Activated CD8-positive, alpha-beta memory T cell treated with anti-CD3 and anti-CD28 coated beads, Interleukin-2, amount 10 ng/mL, durations not matched to agents 7 days and 5 days (primary cell): ENCODE measurements at regions of chr20 and their contacts with region 1.

Region 1: GRCh38 chr20:38790200-38791053 is 15.1 kb upstream of the PPP1R16B start:
- DNase-seq: peak; percentile 71
- ATAC-seq: peak; percentile 81
- H3K4me3 Mint-ChIP-seq: no peak overlapping the region
- H3K27ac Mint-ChIP-seq: no peak overlapping the region
- H3K4me1 Mint-ChIP-seq: peaks cover 12% of the 10 kb centered on the region
- H3K27me3 Mint-ChIP-seq: no peaks in the 10 kb centered on the region

Region 2: GRCh38 chr20:38748097-38748860 is 42.1 kb before region 1 on chr20 and contains the start of gene ACTR5:
- CTCF ChIA-PET with region 1: interaction called, 11 read pairs
- DNase-seq: peak; percentile 97
- ATAC-seq: peak; percentile 91
- H3K4me3 Mint-ChIP-seq: peak within 1 kb of the TSS; percentile 91
- H3K27ac Mint-ChIP-seq: peak within 1 kb of the TSS; percentile 93
- H3K4me1 Mint-ChIP-seq: peaks cover 26% of the 10 kb centered on the region
- H3K27me3 Mint-ChIP-seq: peaks cover 7% of the 10 kb centered on the region
- total RNA-seq, gene ACTR5: 9.5 to 10.6 TPM

Region 3: GRCh38 chr20:38779247-38780097 is 11.0 kb before region 1 on chr20:
- CTCF ChIA-PET with region 1: interaction called, 14 read pairs
- DNase-seq: no peak
- ATAC-seq: no peak
- H3K4me3 Mint-ChIP-seq: no peak overlapping the region
- H3K27ac Mint-ChIP-seq: no peak overlapping the region
- H3K4me1 Mint-ChIP-seq: peaks cover 11% of the 10 kb centered on the region
- H3K27me3 Mint-ChIP-seq: no peaks in the 10 kb centered on the region

Region 4: DNA sequence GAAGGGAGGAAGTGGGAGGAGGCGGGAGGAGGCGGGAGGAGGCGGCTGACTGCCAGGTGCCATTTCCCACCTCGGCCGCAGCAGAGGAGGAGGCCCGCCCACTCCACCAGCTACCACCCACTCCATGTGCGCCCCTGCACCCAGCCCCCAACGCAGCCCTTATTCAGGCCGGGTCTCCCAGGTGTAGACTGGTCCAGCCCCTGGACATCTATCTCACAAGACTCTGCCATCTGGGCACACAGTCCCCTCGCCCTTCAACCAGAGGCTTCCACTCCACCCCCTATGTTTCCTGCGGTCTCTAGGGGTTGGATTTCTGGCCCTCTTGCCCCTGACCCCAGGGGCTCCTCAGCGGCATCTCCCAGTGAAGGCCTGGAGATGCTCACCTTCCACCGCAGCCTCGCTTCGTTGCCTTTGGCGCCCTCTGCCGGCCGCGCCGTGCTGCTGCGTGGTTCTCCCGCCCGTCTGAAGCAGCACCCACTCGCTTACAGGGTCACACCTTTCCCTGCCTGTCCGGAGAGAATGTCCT is 103.2 kb after region 1 on chr20:
- CTCF ChIA-PET with region 1: interaction called, 27 read pairs
- DNase-seq: peak; percentile 86
- ATAC-seq: peak; percentile 87
- H3K4me3 Mint-ChIP-seq: peak overlapping the region; percentile 42
- H3K27ac Mint-ChIP-seq: peak overlapping the region; percentile 89
- H3K4me1 Mint-ChIP-seq: peaks cover 68% of the 10 kb centered on the region
- H3K27me3 Mint-ChIP-seq: no peaks in the 10 kb centered on the region